MCF 10A (cell line): ENCODE measurements at regions of chr17 and their contacts with region 1.

Region 1: GRCh38 chr17:57849874-57850754 is at the start of gene MRPS23:
- DNase-seq: peak; percentile 98
- H3K4me3 Mint-ChIP-seq: peak within 1 kb of the TSS; percentile 98
- H3K27ac Mint-ChIP-seq: peak within 1 kb of the TSS; percentile 98
- H3K4me1 Mint-ChIP-seq: peaks cover 38% of the 10 kb centered on the region
- H3K27me3 Mint-ChIP-seq: no peaks in the 10 kb centered on the region
- CTCF ChIP-seq: no peak
- total RNA-seq, gene MRPS23: 54.1 and 59.3 TPM in 2 replicates

Region 2: GRCh38 chr17:57833179-57833939 is 16.8 kb before region 1 on chr17:
- CTCF ChIA-PET with region 1: interaction called, 30 read pairs
- POLR2A ChIA-PET with region 1: interaction called, 19 read pairs
- intact Hi-C with region 1: no loop called
- DNase-seq: peak; percentile 70
- H3K4me3 Mint-ChIP-seq: no peak overlapping the region
- H3K27ac Mint-ChIP-seq: no peak overlapping the region
- H3K4me1 Mint-ChIP-seq: peaks cover 15% of the 10 kb centered on the region
- H3K27me3 Mint-ChIP-seq: no peaks in the 10 kb centered on the region
- CTCF ChIP-seq: peak; percentile 78

Region 3: GRCh38 chr17:57868007-57868909 is 18.1 kb after region 1 on chr17:
- CTCF ChIA-PET with region 1: interaction called, 6 read pairs
- POLR2A ChIA-PET with region 1: interaction called, 53 read pairs
- intact Hi-C with region 1: no loop called
- DNase-seq: peak; percentile 93
- H3K4me3 Mint-ChIP-seq: peak overlapping the region; percentile 41
- H3K27ac Mint-ChIP-seq: peak overlapping the region; percentile 93
- H3K4me1 Mint-ChIP-seq: peaks cover 33% of the 10 kb centered on the region
- H3K27me3 Mint-ChIP-seq: no peaks in the 10 kb centered on the region
- CTCF ChIP-seq: peak; percentile 65

Region 4: DNA sequence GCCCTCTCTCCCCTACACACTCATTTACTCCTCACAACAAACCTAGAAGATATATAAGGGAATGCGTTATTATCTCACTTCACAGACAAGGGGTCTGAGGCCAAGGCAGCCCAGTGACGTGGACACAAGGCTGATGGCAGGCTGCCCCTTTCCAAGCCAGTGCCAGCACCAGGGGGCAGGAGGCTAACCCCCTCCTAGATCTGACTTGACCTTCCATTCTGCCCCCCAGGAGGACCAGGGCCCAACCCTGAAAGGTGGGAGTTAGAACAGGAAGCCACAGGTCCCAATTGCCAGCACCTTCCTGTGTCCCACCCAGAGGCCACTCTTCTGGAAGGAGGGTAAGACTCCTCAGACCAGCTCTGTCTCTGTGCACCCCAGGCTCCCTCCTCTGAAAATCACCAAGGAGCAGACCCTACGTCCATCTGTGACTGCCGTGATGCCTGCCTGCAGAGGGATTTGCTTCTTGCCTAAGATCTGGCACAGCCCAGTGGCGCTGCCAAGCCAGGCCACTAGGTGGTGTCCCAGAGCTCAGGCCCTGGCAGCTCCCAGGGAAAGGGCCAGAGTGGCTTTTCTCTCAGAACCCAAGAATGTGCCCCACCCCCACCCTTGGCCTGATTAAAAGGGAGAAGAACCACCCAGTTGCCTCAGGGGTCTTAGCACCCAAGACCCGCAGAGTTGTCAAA is 42.2 kb after region 1 on chr17:
- CTCF ChIA-PET with region 1: interaction called, 8 read pairs
- POLR2A ChIA-PET with region 1: interaction called, 13 read pairs
- intact Hi-C with region 1: loop called (anchors 5 kb)
- DNase-seq: peak; percentile 91
- H3K4me3 Mint-ChIP-seq: peak overlapping the region; percentile 64
- H3K27ac Mint-ChIP-seq: peak overlapping the region; percentile 87
- H3K4me1 Mint-ChIP-seq: peaks cover 41% of the 10 kb centered on the region
- H3K27me3 Mint-ChIP-seq: no peaks in the 10 kb centered on the region
- CTCF ChIP-seq: peak; percentile 96

Region 5: GRCh38 chr17:57946798-57947358 is 96.8 kb after region 1 on chr17:
- CTCF ChIA-PET with region 1: interaction called, 8 read pairs
- POLR2A ChIA-PET with region 1: interaction called, 13 read pairs
- intact Hi-C with region 1: no loop called
- DNase-seq: peak; percentile 56
- H3K4me3 Mint-ChIP-seq: peak overlapping the region; percentile 68
- H3K27ac Mint-ChIP-seq: peak overlapping the region; percentile 49
- H3K4me1 Mint-ChIP-seq: peaks cover 46% of the 10 kb centered on the region
- H3K27me3 Mint-ChIP-seq: no peaks in the 10 kb centered on the region
- CTCF ChIP-seq: no peak

Region 6: GRCh38 chr17:57995076-57995956 is 145.2 kb after region 1 on chr17:
- CTCF ChIA-PET with region 1: interaction called, 418 read pairs
- POLR2A ChIA-PET with region 1: interaction called, 28 read pairs
- intact Hi-C with region 1: no loop called
- DNase-seq: peak; percentile 85
- H3K4me3 Mint-ChIP-seq: no peak overlapping the region
- H3K27ac Mint-ChIP-seq: peak overlapping the region; percentile 50
- H3K4me1 Mint-ChIP-seq: peaks cover 6% of the 10 kb centered on the region
- H3K27me3 Mint-ChIP-seq: no peaks in the 10 kb centered on the region
- CTCF ChIP-seq: peak; percentile 70

Region 7: GRCh38 chr17:58082870-58083490 is 232.9 kb after region 1 on chr17 and contains the start of gene DYNLL2:
- CTCF ChIA-PET with region 1: no interaction called
- POLR2A ChIA-PET with region 1: interaction called, 4 read pairs
- intact Hi-C with region 1: loop called (anchors 10 kb)
- DNase-seq: peak; percentile 91
- H3K4me3 Mint-ChIP-seq: peak within 1 kb of the TSS; percentile 72
- H3K27ac Mint-ChIP-seq: peak within 1 kb of the TSS; percentile 49
- H3K4me1 Mint-ChIP-seq: peaks cover 14% of the 10 kb centered on the region
- H3K27me3 Mint-ChIP-seq: peaks cover 29% of the 10 kb centered on the region
- CTCF ChIP-seq: no peak
- total RNA-seq, gene DYNLL2: 15.5 and 22.3 TPM in 2 replicates